B cell (primary cell): ENCODE measurements at regions of chr10 and their contacts with region 1.

Region 1: GRCh38 chr10:60728056-60728455 is 50.2 kb upstream of the CDK1 start:
- DNase-seq: no peak
- ATAC-seq: no peak
- H3K4me3 ChIP-seq: no peak overlapping the region
- H3K4me3 Mint-ChIP-seq: no peak overlapping the region
- H3K27ac ChIP-seq: no peak overlapping the region
- H3K27ac Mint-ChIP-seq: no peak overlapping the region
- H3K4me1 ChIP-seq: peaks cover 16 to 18% of the 10 kb centered on the region in 2 donors
- H3K4me1 Mint-ChIP-seq: peaks cover 39% of the 10 kb centered on the region
- H3K27me3 ChIP-seq: peaks cover 0 to 4% (median 1%) of the 10 kb centered on the region in 4 experiments
- H3K27me3 Mint-ChIP-seq: peaks cover 11% of the 10 kb centered on the region
- CTCF ChIP-seq: no peak

Region 2: DNA sequence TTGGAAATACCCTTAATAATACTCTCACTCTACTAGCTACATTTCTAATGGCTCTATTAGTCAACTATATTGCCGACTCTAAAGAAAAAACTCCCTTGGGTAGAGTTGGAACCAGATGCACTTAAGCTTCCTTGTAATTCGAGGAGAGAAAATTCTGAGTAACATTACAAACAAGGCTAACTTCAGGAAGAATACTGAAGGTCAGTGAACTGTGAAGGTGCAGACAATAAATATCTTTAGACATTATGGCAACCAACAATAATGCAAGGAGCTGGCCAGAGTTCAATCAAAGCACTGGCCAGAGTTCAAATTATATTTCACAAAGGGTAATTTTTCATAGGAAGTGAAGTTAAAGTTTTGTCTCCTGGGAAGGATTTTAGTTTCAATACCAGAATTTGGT is 934.1 kb before region 1 on chr10:
- CTCF ChIA-PET with region 1: no interaction called
- POLR2A ChIA-PET with region 1: no interaction called
- intact Hi-C with region 1: no loop called
- DNase-seq: no peak
- ATAC-seq: no peak
- H3K4me3 ChIP-seq: no peak overlapping the region
- H3K4me3 Mint-ChIP-seq: no peak overlapping the region
- H3K27ac ChIP-seq: no peak overlapping the region
- H3K27ac Mint-ChIP-seq: no peak overlapping the region
- H3K4me1 ChIP-seq: no peaks in the 10 kb centered on the region
- H3K4me1 Mint-ChIP-seq: no peaks in the 10 kb centered on the region
- H3K27me3 ChIP-seq: no peaks in the 10 kb centered on the region
- H3K27me3 Mint-ChIP-seq: no peaks in the 10 kb centered on the region
- CTCF ChIP-seq: no peak

Region 3: DNA sequence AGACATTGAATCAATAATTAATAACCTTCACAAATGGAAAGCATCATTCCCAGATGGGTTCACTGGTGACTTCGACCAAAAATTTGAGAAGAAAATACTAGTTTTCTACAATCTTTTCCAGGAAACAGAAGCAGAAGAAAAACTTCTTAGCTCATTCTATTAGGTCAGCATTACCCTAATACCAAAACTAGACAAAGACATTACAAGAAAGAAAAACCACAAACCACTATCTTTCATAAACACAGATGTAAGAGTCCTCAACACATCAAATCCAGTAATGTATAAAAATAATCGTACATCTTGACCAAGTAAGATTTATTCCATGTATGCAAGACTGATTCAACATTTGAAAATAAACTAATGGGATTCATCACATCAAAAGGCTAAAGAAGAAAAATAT is 13.8 kb before region 1 on chr10:
- CTCF ChIA-PET with region 1: no interaction called
- POLR2A ChIA-PET with region 1: no interaction called
- intact Hi-C with region 1: loop called (anchors 2 kb)
- DNase-seq: no peak
- ATAC-seq: no peak
- H3K4me3 ChIP-seq: no peak overlapping the region
- H3K4me3 Mint-ChIP-seq: no peak overlapping the region
- H3K27ac ChIP-seq: no peak overlapping the region
- H3K27ac Mint-ChIP-seq: no peak overlapping the region
- H3K4me1 ChIP-seq: no peaks in the 10 kb centered on the region
- H3K4me1 Mint-ChIP-seq: peaks cover 9% of the 10 kb centered on the region
- H3K27me3 ChIP-seq: no peaks in the 10 kb centered on the region
- H3K27me3 Mint-ChIP-seq: peaks cover 4% of the 10 kb centered on the region
- CTCF ChIP-seq: no peak